BJ (cell line): ENCODE measurements at regions of chr15 and their contacts with region 1.

Region 1: GRCh38 chr15:71743861-71744382 is 66.4 kb upstream of the NR2E3 start:
- DNase-seq: no peak
- H3K4me3 ChIP-seq: no peak overlapping the region
- H3K27me3 ChIP-seq: no peaks in the 10 kb centered on the region
- CTCF ChIP-seq: peak; percentile 75

Region 2: GRCh38 chr15:70679919-70680231 is 1064.0 kb before region 1 on chr15:
- CTCF ChIA-PET with region 1: no interaction called
- POLR2A ChIA-PET with region 1: interaction called, 10 read pairs
- DNase-seq: no peak
- H3K4me3 ChIP-seq: no peak overlapping the region
- H3K27me3 ChIP-seq: no peaks in the 10 kb centered on the region
- CTCF ChIP-seq: no peak

Region 3: GRCh38 chr15:71730277-71731144 is 13.4 kb before region 1 on chr15:
- CTCF ChIA-PET with region 1: interaction called, 11 read pairs
- POLR2A ChIA-PET with region 1: no interaction called
- DNase-seq: no peak
- H3K4me3 ChIP-seq: no peak overlapping the region
- H3K27me3 ChIP-seq: no peaks in the 10 kb centered on the region
- CTCF ChIP-seq: peak; percentile 82

Region 4: DNA sequence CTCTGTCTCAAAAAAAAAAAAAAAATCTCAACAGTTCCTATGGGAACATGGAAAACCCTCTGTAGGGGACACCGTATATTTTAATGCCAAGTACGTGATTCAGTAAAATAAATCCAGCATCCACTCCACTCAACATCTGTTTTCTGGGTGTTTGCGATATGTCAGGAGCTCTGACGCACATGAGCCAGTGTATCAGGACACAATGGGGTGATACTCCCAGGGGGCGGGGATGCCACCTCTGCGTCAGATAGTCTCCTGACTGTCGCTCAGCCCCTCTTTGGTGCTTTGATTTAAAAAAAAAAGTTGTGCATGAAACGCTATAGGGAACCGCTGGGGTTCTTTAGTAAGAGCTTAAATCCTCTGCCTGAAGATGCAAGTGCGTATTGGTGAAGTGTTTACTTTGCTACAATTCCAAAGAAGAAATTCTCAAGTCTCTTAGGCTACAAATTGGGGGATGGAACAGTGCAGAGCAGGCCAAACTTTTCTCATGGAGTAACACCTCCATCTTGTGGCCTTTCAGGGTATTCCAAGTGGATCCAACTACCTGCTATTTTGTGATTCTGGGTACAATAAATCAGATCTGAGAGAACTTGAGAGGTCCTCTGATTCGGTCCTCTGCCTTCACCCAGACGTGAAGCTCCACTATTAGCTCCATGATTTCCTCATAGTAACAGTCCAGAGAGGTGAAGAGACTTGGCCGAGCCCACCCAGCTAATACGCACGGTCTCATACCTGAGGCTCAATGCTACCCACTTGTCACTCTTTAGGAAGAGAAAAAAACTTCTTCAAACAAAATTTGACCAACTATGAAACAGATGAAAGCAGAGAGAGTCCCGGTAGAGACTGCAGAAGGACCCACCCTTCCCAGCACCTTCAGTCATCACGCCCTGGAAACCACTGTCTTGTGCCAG is 57.2 kb after region 1 on chr15:
- CTCF ChIA-PET with region 1: interaction called, 54 read pairs
- POLR2A ChIA-PET with region 1: interaction called, 5 read pairs
- DNase-seq: no peak
- H3K4me3 ChIP-seq: no peak overlapping the region
- H3K27me3 ChIP-seq: no peaks in the 10 kb centered on the region
- CTCF ChIP-seq: peak; percentile 83

Region 5: GRCh38 chr15:71806452-71806931 is 62.6 kb after region 1 on chr15:
- CTCF ChIA-PET with region 1: interaction called, 54 read pairs
- POLR2A ChIA-PET with region 1: interaction called, 5 read pairs
- DNase-seq: no peak
- H3K4me3 ChIP-seq: no peak overlapping the region
- H3K27me3 ChIP-seq: peaks cover 2% of the 10 kb centered on the region; the same call in 1 of the 2 replicates
- CTCF ChIP-seq: no peak

Region 6: DNA sequence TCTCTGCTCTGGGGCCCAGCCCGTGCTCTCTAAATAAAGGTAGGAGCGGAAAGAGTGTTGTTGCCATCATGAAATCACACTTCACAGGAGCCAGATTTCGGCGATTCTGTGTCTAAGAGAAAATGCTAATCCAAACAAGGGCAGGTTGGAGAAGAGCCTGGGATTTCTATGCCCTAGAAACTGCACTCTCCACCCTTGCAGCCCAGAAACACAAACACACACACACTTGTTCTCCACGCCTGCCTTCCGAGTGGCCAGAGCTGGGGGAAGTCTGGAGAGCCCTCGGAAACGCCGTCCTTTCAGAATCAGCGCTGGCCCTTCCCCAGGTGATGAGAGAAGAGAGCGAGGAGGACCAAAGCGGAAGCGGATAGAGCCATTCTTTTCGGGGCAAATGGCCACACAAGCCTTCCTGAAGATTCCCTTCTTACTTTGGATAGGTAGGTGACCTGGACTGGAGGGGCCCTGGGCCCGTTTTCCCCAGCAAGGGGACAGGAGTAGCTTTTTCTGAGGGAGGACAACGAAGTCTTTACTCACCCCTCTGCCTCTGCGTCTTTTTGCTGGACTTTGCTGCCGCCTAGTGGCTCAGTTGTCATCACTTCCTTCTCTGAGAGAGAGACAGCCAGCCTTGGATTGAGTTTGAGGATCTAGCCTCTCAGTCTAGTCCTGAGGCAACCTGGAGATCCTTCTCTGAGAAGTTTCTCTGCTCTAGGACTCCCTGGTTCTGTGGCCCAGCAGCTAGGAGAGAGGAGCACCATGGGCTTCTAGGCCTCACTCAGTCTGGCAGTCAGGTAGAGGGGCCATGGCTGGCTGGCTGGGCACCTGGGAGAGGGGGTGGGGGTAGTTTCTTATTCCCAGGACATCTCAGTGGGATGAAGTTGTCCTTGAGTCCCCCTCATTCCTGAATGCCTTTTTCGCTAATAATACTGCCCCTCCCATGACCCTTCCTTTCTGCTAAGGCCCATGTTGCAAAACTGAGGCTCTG is 412.0 kb after region 1 on chr15:
- CTCF ChIA-PET with region 1: interaction called, 9 read pairs
- POLR2A ChIA-PET with region 1: interaction called, 10 read pairs
- DNase-seq: peak; percentile 29
- H3K4me3 ChIP-seq: peak overlapping the region; percentile 25
- H3K27me3 ChIP-seq: no peaks in the 10 kb centered on the region
- CTCF ChIP-seq: peak; percentile 84